Transverse colon (tissue), 4 donors: ENCODE measurements at regions of chr2 and their contacts with region 1.

Region 1: GRCh38 chr2:176096986-176097819 is 2.4 kb upstream of the HOXD12 start:
- DNase-seq: peak; percentile 72
- H3K4me3 ChIP-seq: peak overlapping the region in 3 of 4 donors; percentile 30 to 60 (median 30)
- H3K27ac ChIP-seq: no peak overlapping the region
- H3K4me1 ChIP-seq: peaks cover 8 to 39% (median 29%) of the 10 kb centered on the region in 4 donors
- H3K27me3 ChIP-seq: peaks cover 100% of the 10 kb centered on the region
- CTCF ChIP-seq: peak; percentile 81 to 88 (median 86)
- EP300 ChIP-seq: no peak
- POLR2A ChIP-seq: no peak

Region 2: GRCh38 chr2:175366815-175367214 is 730.4 kb before region 1 on chr2:
- in situ Hi-C with region 1: loop called in 3 of 4 experiments (anchors 10 to 25 kb)
- intact Hi-C with region 1: no loop called
- DNase-seq: peak; percentile 10
- H3K4me3 ChIP-seq: no peak overlapping the region
- H3K27ac ChIP-seq: no peak overlapping the region
- H3K4me1 ChIP-seq: peaks cover 0 to 6% (median 0%) of the 10 kb centered on the region in 4 donors
- H3K27me3 ChIP-seq: peaks cover 40% of the 10 kb centered on the region
- CTCF ChIP-seq: peak; percentile 43 to 67 (median 61)
- EP300 ChIP-seq: no peak
- POLR2A ChIP-seq: no peak

Region 3: GRCh38 chr2:175684457-175684856 is 412.7 kb before region 1 on chr2:
- in situ Hi-C with region 1: loop called in 2 of 4 experiments (anchors 10 to 25 kb)
- intact Hi-C with region 1: no loop called
- DNase-seq: no peak
- H3K4me3 ChIP-seq: no peak overlapping the region
- H3K27ac ChIP-seq: no peak overlapping the region
- H3K4me1 ChIP-seq: no peaks in the 10 kb centered on the region
- H3K27me3 ChIP-seq: peaks cover 34% of the 10 kb centered on the region
- CTCF ChIP-seq: no peak
- EP300 ChIP-seq: no peak
- POLR2A ChIP-seq: no peak

Region 4: DNA sequence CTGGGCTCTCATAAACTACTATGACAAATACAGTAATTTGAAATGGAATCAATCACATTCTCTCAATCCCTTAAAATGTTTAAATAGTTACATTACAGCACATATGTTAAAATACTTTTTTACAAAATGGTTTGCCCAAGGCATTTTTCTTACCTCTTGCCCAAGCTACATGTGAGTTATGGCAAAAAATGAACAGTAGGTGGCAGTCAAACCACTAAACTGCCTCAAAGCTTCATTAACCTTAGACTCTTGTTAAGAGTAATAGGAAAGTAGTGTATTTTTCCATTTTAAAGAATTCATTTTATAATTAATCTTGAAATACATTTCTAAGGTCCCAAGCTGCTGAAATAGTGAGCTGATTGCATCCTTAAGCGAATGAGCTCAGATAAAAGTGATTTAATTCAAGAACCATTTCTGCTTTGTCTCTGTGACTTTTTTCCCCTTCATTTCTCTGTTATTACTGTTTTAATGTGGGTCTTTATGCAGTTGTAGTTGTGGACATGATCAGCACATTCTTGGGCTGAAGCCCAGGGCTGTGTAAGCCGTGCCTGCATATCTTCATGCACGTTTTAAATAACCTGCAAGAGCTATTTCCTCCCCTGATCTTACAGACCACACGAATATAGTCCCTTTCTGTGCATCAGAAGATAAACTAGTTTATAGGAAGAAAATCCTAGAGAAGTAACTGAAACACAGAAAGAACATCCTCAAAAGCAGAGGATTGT is 406.9 kb before region 1 on chr2:
- in situ Hi-C with region 1: loop called in 2 of 4 experiments (anchors 10 to 25 kb)
- intact Hi-C with region 1: loop called (anchors 2 kb)
- DNase-seq: peak; percentile 24
- H3K4me3 ChIP-seq: no peak overlapping the region
- H3K27ac ChIP-seq: no peak overlapping the region
- H3K4me1 ChIP-seq: no peaks in the 10 kb centered on the region
- H3K27me3 ChIP-seq: peaks cover 47% of the 10 kb centered on the region
- CTCF ChIP-seq: peak; percentile 70 to 76 (median 72)
- EP300 ChIP-seq: no peak
- POLR2A ChIP-seq: no peak

Region 5: DNA sequence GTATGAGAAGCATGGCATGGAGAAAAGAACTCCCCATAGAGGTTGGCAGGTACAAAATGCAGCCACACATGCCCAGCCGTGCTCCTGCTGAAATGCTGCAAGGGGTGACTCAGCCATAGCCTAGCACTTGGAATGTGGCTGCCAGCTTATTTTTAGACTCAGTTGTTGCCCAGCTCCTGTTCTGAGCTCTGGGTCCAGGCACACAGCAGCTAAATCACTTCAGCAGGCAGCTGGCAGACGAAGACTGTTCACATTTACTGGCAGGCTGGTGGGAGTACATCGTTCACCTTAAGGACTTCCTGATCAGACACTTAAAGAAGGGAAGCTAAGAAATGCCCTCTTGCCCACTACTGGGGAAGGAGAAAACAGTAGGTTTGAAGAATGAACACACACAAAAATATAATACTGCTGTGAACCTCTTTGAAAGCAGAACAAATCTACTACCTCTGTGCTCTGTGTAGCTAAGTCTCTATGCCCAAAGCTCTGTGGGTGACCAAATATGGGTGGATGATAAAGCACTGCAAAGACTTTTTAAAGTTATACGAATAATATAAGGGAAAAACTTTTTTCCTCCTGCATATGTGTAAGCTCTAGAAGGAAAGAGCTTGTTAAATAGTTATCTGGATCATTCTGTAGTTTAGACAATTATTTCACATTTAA is 241.3 kb before region 1 on chr2:
- in situ Hi-C with region 1: no loop called
- intact Hi-C with region 1: no loop called
- DNase-seq: peak; percentile 8
- H3K4me3 ChIP-seq: no peak overlapping the region
- H3K27ac ChIP-seq: peak overlapping the region in 3 of 4 donors; percentile 19 to 27 (median 23)
- H3K4me1 ChIP-seq: no peaks in the 10 kb centered on the region
- H3K27me3 ChIP-seq: no peaks in the 10 kb centered on the region
- CTCF ChIP-seq: no peak
- EP300 ChIP-seq: no peak
- POLR2A ChIP-seq: no peak